ENCODE measurements at regions of chr12 and their contacts with region 1.

Region 1: DNA sequence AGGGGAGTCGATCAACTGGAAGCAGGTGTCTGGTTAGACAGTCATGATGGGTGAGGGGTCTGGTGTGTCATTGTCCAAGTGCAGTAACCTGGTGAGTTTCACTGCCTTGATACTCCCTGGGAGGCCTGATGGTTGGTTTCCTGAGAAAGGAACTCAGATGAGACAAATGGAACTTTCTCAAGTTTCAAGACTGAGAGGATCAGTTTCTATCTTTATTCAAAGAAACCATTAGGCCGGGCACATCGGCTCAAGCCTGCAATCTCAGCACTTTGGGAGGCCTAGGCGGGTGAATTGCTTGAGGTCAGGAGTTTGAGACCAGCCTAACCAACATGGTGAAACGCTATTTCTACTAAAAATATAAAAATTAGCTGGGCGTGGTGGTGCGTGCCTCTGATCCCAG is 776.1 kb downstream of the AACS start:
- DNase-seq: no peak
- ATAC-seq: no peak
- H3K4me3 ChIP-seq: no peak overlapping the region
- H3K27ac ChIP-seq: no peak overlapping the region
- H3K4me1 ChIP-seq: no peaks in the 10 kb centered on the region
- H3K27me3 ChIP-seq: no peaks in the 10 kb centered on the region
- CTCF ChIP-seq: no peak

Region 2: GRCh38 chr12:127507341-127507740 is 1666.0 kb after region 1 on chr12:
- CTCF ChIA-PET with region 1: interaction called, 10 read pairs
- POLR2A ChIA-PET with region 1: no interaction called
- in situ Hi-C with region 1: no loop called
- intact Hi-C with region 1: no loop called
- DNase-seq: no peak
- ATAC-seq: no peak
- H3K4me3 ChIP-seq: no peak overlapping the region
- H3K27ac ChIP-seq: no peak overlapping the region
- H3K4me1 ChIP-seq: no peaks in the 10 kb centered on the region
- H3K27me3 ChIP-seq: no peaks in the 10 kb centered on the region
- CTCF ChIP-seq: no peak